ENCODE measurements at regions of chr15 and their contacts with region 1.

Region 1: GRCh38 chr15:94163999-94164807 is 67.2 kb upstream of the MCTP2 start:
- DNase-seq: no peak
- ATAC-seq: peak; percentile 93
- H3K4me3 ChIP-seq: no peak overlapping the region
- H3K27ac ChIP-seq: no peak overlapping the region
- H3K4me1 ChIP-seq: no peaks in the 10 kb centered on the region
- H3K27me3 ChIP-seq: peaks cover 3% of the 10 kb centered on the region
- CTCF ChIP-seq: peak; percentile 91

Region 2: DNA sequence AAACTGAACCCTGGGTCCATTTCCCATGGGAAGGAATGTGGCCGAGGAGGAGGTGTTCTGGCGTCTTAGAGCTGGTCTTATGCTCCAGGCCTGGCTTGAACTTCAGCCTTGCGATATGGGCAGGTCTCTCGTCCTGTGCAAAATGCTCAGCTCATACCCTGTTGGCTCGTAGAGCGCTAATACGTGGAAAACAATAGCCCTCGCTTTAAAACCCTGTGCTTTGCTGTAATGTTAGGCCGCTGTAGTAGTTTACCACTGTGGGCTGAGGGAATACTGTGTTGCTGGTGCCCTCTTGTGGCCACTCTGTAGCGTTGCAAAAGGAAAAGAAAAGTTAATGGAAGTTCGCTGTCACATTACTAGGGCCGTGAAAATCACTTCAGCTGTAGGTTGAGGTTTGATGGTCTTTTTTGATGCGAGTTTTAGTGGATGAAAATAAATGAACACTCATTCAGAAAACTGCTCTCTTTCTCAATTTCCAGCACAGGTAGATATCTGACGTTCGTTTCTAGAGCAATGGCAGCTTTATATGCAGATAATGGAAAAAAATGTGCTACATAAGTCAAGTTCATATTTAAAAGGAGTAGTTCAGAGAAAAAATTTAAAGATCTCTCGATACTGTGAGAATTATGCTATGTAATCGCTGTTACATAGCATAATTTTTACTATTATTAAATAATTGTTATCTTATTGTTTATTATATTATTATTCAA is 160.1 kb after region 1 on chr15:
- intact Hi-C with region 1: loop called (anchors 10 kb)
- DNase-seq: no peak
- ATAC-seq: peak; percentile 97
- H3K4me3 ChIP-seq: no peak overlapping the region
- H3K27ac ChIP-seq: no peak overlapping the region
- H3K4me1 ChIP-seq: peaks cover 4% of the 10 kb centered on the region
- H3K27me3 ChIP-seq: no peaks in the 10 kb centered on the region
- CTCF ChIP-seq: peak; percentile 94